ENCODE measurements at regions of chr5 and their contacts with region 1.

Region 1: DNA sequence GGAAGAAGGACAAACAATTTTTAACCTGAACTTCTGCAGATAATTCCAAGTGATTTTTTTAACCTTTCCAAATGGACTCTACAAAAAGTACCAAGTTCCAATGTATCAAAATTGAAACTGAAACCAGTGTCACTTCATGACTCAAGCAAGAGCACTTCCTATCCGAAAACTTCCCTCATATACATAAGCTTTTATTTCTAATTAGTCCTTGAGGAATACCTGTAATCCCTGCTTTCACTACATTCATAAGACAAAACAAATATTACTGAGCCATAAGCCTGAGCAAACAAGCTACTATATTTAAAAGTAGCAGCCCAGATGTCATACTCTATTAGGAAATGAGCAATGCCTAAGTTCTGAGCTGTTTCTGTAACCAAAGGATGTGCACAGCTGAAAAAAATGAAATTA is 224.4 kb downstream of the EBF1 start:
- DNase-seq: peak; percentile 57
- H3K4me3 ChIP-seq: peak overlapping the region; percentile 60
- H3K27ac ChIP-seq: peak overlapping the region; percentile 92
- H3K4me1 ChIP-seq: peaks cover 74% of the 10 kb centered on the region
- CTCF ChIP-seq: no peak

Region 2: DNA sequence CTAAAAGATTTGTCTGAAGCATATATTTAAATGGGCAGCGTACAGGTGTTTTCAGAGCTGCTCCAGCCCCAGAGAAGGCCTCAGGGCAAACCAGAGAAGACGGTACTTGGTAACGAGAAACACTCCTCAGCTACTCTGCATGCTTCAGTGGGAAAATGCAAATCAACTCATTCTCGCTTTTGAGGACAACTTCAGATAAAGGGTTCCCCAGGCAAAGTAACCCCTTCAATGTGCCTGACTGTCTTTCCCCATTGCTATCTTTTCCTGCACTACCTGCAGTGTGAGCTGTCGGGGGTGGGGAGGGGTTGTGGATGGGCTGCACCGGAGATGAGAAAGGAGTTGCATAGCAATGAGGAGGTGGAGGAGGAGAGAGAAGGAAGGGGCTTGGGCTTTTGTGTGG is 676.6 kb before region 1 on chr5:
- CTCF ChIA-PET with region 1: no interaction called
- POLR2A ChIA-PET with region 1: no interaction called
- intact Hi-C with region 1: no loop called
- DNase-seq: peak; percentile 91
- H3K4me3 ChIP-seq: peak overlapping the region; percentile 44
- H3K27ac ChIP-seq: peak overlapping the region; percentile 87
- H3K4me1 ChIP-seq: peaks cover 78% of the 10 kb centered on the region
- CTCF ChIP-seq: no peak

Region 3: GRCh38 chr5:158751961-158752655 is 123.2 kb before region 1 on chr5:
- CTCF ChIA-PET with region 1: no interaction called
- POLR2A ChIA-PET with region 1: interaction called, 6 read pairs
- intact Hi-C with region 1: loop called (anchors 2 kb)
- DNase-seq: peak; percentile 91
- H3K4me3 ChIP-seq: peak overlapping the region; percentile 57
- H3K27ac ChIP-seq: peak overlapping the region; percentile 99
- H3K4me1 ChIP-seq: peaks cover 83% of the 10 kb centered on the region
- CTCF ChIP-seq: no peak

Region 4: DNA sequence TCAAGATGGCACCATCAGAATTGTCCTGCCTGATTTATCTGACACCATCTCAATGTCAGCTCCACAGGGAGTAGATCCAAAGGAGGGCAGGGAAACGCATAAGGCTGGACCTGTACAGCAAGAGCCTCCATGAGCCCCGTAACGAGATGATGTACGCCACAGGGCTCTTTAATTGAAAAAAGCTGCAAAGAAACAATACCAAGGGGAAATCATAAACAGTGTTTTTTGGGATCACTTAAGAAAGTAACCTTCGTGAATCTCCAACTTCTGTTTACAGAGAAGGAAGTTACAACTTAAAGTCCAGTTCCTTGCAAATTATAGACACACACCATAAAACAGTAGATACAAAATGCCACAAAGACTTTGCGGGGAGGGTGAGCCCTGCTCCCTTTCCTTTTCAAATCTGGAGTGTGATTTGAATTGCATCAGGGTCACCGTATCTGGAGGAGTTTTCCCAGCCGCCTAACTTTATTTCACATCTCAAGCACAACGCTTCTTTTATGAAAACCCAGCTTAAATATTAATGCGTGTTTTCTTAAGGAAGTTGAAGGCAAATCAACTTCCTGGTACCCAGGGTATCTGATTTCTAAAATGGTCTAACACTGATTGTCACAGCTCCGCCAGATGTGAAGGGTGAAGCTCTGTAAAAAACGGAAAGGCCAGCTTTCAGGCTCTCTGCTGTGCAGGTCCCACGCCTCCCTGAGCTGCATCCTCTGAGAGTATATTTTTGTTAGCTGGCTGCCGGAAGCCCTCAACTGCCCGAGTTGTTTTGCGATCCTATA is 135.6 kb after region 1 on chr5:
- CTCF ChIA-PET with region 1: no interaction called
- POLR2A ChIA-PET with region 1: no interaction called
- intact Hi-C with region 1: loop called (anchors 2 kb)
- DNase-seq: peak; percentile 95
- H3K4me3 ChIP-seq: peak overlapping the region; percentile 73
- H3K27ac ChIP-seq: peak overlapping the region; percentile 100
- H3K4me1 ChIP-seq: peaks cover 80% of the 10 kb centered on the region
- CTCF ChIP-seq: no peak; the same call in 1 of the 2 replicates

Measured in OCI-LY7 (cell line).